Endothelial cell of umbilical vein (primary cell): ENCODE measurements at regions of chr1 and their contacts with region 1.

Region 1: GRCh38 chr1:212455803-212456528 is 23.2 kb downstream of the NENF start:
- DNase-seq: peak; percentile 82
- H3K4me3 ChIP-seq: no peak overlapping the region
- H3K27ac ChIP-seq: no peak overlapping the region
- H3K4me1 ChIP-seq: no peaks in the 10 kb centered on the region
- H3K27me3 ChIP-seq: peaks cover 0 to 2% of the 10 kb centered on the region in 2 experiments
- CTCF ChIP-seq: peak; percentile 91
- POLR2A ChIP-seq: no peak

Region 2: GRCh38 chr1:211145944-211146343 is 1310.0 kb before region 1 on chr1:
- CTCF ChIA-PET with region 1: no interaction called
- POLR2A ChIA-PET with region 1: no interaction called
- dilution Hi-C with region 1: no loop called
- intact Hi-C with region 1: no loop called
- DNase-seq: no peak
- H3K4me3 ChIP-seq: no peak overlapping the region
- H3K27ac ChIP-seq: no peak overlapping the region
- H3K4me1 ChIP-seq: no peaks in the 10 kb centered on the region
- H3K27me3 ChIP-seq: no peaks in the 10 kb centered on the region
- CTCF ChIP-seq: no peak
- POLR2A ChIP-seq: no peak

Region 3: DNA sequence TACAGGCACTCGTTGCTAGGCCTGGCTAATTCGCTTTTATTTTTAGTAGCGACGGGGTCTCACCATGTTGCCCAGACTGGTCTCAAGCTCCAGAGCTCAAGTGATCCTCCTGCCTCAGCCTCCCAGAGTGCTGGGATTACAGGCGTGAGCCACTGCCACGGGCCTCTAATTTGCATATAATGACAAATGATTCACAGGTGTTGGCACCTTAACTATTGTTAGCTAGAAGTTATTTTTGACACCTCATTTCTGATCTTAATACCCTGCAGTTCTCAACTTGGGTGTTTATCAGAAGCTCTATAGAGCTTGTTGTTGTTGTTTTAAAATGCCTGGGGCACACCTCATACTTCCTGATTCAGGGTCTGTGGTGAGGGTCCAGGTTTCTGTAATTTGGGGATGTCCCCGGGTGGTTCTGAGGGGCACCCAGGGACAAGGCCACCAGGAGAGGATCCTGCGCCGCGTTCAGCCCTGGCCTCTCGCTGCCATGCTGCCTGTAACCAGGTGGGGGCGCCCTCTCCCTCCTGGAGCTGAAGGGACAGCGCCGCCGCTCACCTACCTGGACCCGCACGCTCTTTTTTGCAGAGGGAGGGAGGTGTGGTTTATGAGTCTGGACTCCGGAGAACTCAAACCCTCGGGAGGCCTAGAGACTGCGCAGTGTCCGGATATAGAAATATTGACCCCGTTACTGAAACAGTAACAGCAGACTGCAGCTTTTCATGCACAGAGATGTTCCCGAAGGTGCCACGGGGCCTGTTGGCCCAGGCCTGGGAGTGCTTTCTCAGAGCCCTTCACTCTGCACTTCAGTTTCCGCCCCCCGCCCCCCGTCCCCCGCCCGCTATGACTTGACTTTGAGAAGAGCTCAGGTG is 757.6 kb before region 1 on chr1:
- CTCF ChIA-PET with region 1: interaction called, 75 read pairs
- POLR2A ChIA-PET with region 1: no interaction called
- dilution Hi-C with region 1: no loop called
- intact Hi-C with region 1: loop called (anchors 1 kb)
- DNase-seq: peak; percentile 60
- H3K4me3 ChIP-seq: no peak overlapping the region
- H3K27ac ChIP-seq: no peak overlapping the region
- H3K4me1 ChIP-seq: no peaks in the 10 kb centered on the region
- H3K27me3 ChIP-seq: peaks cover 10 to 11% of the 10 kb centered on the region in 2 experiments
- CTCF ChIP-seq: peak; percentile 96 to 98
- POLR2A ChIP-seq: no peak

Region 4: GRCh38 chr1:212070720-212071302 is 385.2 kb before region 1 on chr1:
- CTCF ChIA-PET with region 1: interaction called, 190 read pairs
- POLR2A ChIA-PET with region 1: interaction called, 4 read pairs
- dilution Hi-C with region 1: no loop called
- intact Hi-C with region 1: no loop called
- DNase-seq: peak; percentile 72
- H3K4me3 ChIP-seq: no peak overlapping the region
- H3K27ac ChIP-seq: no peak overlapping the region
- H3K4me1 ChIP-seq: peaks cover 23% of the 10 kb centered on the region
- H3K27me3 ChIP-seq: no peaks in the 10 kb centered on the region
- CTCF ChIP-seq: peak; percentile 48 to 49
- POLR2A ChIP-seq: no peak

Region 5: GRCh38 chr1:212341090-212341489 is 114.9 kb before region 1 on chr1:
- CTCF ChIA-PET with region 1: no interaction called
- POLR2A ChIA-PET with region 1: no interaction called
- dilution Hi-C with region 1: no loop called
- intact Hi-C with region 1: no loop called
- DNase-seq: no peak
- H3K4me3 ChIP-seq: no peak overlapping the region
- H3K27ac ChIP-seq: no peak overlapping the region
- H3K4me1 ChIP-seq: no peaks in the 10 kb centered on the region
- H3K27me3 ChIP-seq: no peaks in the 10 kb centered on the region
- CTCF ChIP-seq: no peak
- POLR2A ChIP-seq: no peak

Region 6: GRCh38 chr1:212414328-212415106 is 41.4 kb before region 1 on chr1 and contains the start of gene PACC1:
- CTCF ChIA-PET with region 1: interaction called, 10 read pairs
- POLR2A ChIA-PET with region 1: no interaction called
- dilution Hi-C with region 1: no loop called
- intact Hi-C with region 1: loop called (anchors 2 kb)
- DNase-seq: peak; percentile 92
- H3K4me3 ChIP-seq: peak within 1 kb of the TSS; percentile 44 to 80 (median 73)
- H3K27ac ChIP-seq: no peak within 1 kb of the TSS
- H3K4me1 ChIP-seq: peaks cover 6% of the 10 kb centered on the region
- H3K27me3 ChIP-seq: no peaks in the 10 kb centered on the region
- CTCF ChIP-seq: peak in 1 of 2 donors; percentile 25
- POLR2A ChIP-seq: peak; percentile 65
- total RNA-seq, gene PACC1: 18.4 and 21.0 TPM in 2 replicates

Region 7: DNA sequence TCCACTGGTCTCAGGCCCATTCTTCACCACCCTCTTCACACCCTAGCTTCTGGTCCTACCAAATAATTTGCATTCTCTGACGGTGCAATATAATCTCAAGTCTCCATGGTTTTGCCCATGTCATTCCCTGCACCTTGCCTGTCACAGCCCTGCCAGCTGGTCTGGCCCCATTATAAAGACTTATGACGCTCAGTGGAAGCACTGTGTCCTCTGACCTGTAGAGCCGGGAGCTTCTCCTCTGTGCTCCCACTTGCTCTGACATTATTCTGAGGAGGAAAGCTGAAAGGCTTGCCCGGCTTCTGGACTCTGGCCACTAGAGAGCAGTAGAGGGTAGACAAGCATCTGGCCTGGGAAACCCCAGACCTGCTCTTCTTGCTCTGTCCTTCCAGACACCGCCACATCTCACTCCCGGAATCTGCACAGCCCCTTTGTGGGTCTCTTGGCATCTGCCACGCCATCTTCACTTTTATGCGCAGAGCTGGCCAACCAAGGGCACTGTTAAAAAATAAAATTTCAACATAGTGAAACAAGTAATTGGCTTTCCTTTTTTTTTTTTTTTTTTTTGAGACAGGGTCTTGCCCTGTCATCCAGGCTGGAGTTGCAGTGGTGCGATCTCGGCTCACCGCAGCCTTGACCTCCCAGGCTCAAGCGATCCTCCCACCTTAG is 21.2 kb after region 1 on chr1:
- CTCF ChIA-PET with region 1: interaction called, 37 read pairs
- POLR2A ChIA-PET with region 1: no interaction called
- dilution Hi-C with region 1: no loop called
- intact Hi-C with region 1: no loop called
- DNase-seq: peak; percentile 83
- H3K4me3 ChIP-seq: no peak overlapping the region
- H3K27ac ChIP-seq: no peak overlapping the region
- H3K4me1 ChIP-seq: peaks cover 13% of the 10 kb centered on the region
- H3K27me3 ChIP-seq: peaks cover 0 to 8% of the 10 kb centered on the region in 2 experiments
- CTCF ChIP-seq: peak; percentile 86 to 93
- POLR2A ChIP-seq: no peak

Region 8: GRCh38 chr1:212782422-212783154 is 326.6 kb after region 1 on chr1:
- CTCF ChIA-PET with region 1: interaction called, 11 read pairs
- POLR2A ChIA-PET with region 1: no interaction called
- dilution Hi-C with region 1: no loop called
- intact Hi-C with region 1: loop called (anchors 1 kb)
- DNase-seq: peak; percentile 79
- H3K4me3 ChIP-seq: no peak overlapping the region
- H3K27ac ChIP-seq: peak overlapping the region; percentile 15
- H3K4me1 ChIP-seq: peaks cover 15% of the 10 kb centered on the region
- H3K27me3 ChIP-seq: no peaks in the 10 kb centered on the region
- CTCF ChIP-seq: peak; percentile 34 to 38
- POLR2A ChIP-seq: no peak